Mucosa of descending colon (tissue), 3 donors: ENCODE measurements at regions of chr19 and their contacts with region 1.

Region 1: DNA sequence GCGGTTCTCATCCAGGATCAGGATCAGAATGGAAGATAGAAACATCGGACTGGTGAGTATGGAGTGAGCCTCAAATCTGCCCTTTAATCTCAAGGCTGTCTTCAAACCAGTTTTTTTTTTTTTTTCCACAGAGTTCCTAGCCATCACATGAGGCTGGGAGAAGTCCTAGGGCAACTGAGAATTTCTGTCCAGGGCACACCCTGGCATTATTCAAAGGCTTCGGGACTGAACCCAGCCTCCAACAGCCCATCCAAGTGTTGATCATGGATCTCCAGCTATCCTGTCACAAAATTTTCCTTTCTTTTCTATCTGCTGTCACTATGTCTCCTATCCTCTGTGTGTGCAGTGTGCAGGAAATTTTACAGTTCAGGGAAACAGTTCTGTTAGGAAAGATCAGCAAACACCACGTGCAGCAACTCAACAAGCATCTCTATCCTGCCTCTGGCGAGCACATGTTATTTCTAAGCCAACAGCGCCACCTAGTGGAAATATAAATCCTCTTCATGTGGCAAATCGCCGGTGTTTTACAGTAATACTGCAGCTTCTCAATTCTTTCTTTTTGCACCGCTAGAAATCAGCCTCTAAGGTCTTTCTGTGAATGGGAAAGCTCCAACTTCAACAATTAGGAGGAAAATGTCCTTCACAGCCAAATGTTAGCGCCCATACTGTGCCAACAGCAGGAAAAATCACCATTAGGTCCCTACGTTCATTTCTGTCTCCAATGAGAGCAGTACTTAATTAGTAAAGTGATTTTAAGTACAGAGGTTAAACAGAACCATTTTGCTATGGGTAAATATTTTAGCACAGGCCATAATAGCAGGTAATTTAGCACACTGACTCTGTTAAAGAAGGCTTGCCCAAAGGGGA is 21.4 kb upstream of the ZNF181 start:
- DNase-seq: peak in 1 of 3 donors; percentile 73
- ATAC-seq: peak; percentile 80
- H3K4me3 ChIP-seq: no peak overlapping the region
- H3K4me1 ChIP-seq: no peaks in the 10 kb centered on the region
- CTCF ChIP-seq: peak; percentile 56

Region 2: GRCh38 chr19:34639491-34640085 is 73.0 kb before region 1 on chr19:
- intact Hi-C with region 1: loop called (anchors 5 kb)
- DNase-seq: peak in 1 of 3 donors; percentile 69
- ATAC-seq: peak; percentile 72
- H3K4me3 ChIP-seq: no peak overlapping the region
- H3K4me1 ChIP-seq: no peaks in the 10 kb centered on the region
- CTCF ChIP-seq: peak; percentile 56